Activated CD4-positive, alpha-beta memory T cell treated with anti-CD3 and anti-CD28 coated beads for 36 hours (primary cell): ENCODE measurements at regions of chr11 and their contacts with region 1.

Region 1: DNA sequence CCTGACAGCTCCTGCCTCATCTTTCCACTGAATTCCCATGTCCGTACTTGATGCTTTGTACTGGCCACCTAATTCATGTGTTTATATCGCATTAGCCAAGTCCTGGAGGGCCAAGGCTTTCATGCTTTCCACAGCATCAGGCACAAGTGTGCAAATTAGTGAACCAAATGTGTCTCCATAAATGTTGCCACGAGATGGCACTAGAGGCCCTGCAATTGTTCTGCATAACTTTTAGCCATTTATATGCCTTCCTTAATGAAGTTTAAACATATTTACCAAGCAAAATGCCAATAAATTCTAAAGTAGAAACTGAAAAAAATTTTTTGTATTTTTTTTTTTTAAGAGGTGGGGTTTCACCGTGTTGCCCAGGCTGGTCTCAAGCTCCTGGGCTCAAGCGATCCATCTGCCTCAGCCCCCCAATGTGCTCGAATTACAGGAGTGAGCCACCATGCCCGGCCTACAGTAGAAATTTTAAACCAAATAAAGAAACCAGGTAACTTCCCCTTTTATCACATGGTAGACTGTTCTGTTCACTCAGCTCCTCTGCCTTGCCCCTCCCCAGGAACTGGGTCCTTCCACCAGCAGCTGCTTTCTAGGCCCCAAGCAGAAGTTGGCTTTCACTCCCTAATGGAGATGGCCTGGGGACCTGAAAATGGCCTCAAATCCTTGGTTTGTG is 20.8 kb upstream of the IL18BP start:
- DNase-seq: peak; percentile 55
- H3K4me3 Mint-ChIP-seq: no peak overlapping the region
- H3K27ac Mint-ChIP-seq: no peak overlapping the region
- H3K4me1 Mint-ChIP-seq: peaks cover 3% of the 10 kb centered on the region
- H3K27me3 Mint-ChIP-seq: no peaks in the 10 kb centered on the region

Region 2: GRCh38 chr11:71913756-71914526 is 63.9 kb before region 1 on chr11:
- CTCF ChIA-PET with region 1: interaction called, 4 read pairs
- POLR2A ChIA-PET with region 1: no interaction called
- intact Hi-C with region 1: loop called (anchors 5 kb)
- DNase-seq: no peak
- H3K4me3 Mint-ChIP-seq: no peak overlapping the region
- H3K27ac Mint-ChIP-seq: peak overlapping the region; percentile 75
- H3K4me1 Mint-ChIP-seq: peaks cover 28% of the 10 kb centered on the region
- H3K27me3 Mint-ChIP-seq: no peaks in the 10 kb centered on the region

Region 3: GRCh38 chr11:71948314-71949027 is 29.4 kb before region 1 on chr11:
- CTCF ChIA-PET with region 1: interaction called, 11 read pairs
- POLR2A ChIA-PET with region 1: no interaction called
- intact Hi-C with region 1: no loop called
- DNase-seq: no peak
- H3K4me3 Mint-ChIP-seq: no peak overlapping the region
- H3K27ac Mint-ChIP-seq: no peak overlapping the region
- H3K4me1 Mint-ChIP-seq: peaks cover 31% of the 10 kb centered on the region
- H3K27me3 Mint-ChIP-seq: no peaks in the 10 kb centered on the region

Region 4: DNA sequence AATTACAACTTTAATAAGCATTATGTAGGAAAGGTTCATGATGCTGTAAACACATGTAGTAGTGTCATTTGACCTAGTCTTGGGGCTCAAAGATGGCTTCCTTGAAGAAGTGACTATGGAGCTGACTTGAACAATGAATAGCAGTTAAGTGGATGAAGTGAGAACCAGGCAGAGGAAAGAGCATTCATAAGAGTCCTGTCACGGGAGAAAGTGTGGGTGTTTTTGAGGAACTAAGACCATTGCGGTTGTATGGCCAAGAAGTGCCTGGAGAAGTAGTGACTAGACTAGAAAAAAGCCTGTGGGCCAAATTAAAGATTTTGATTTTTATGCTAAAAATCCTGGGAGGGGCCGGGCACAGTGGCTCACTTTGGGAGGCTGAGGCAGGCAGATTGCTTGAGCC is 13.6 kb after region 1 on chr11:
- CTCF ChIA-PET with region 1: interaction called, 39 read pairs
- POLR2A ChIA-PET with region 1: no interaction called
- intact Hi-C with region 1: no loop called
- DNase-seq: no peak
- H3K4me3 Mint-ChIP-seq: no peak overlapping the region
- H3K27ac Mint-ChIP-seq: no peak overlapping the region
- H3K4me1 Mint-ChIP-seq: peaks cover 5% of the 10 kb centered on the region
- H3K27me3 Mint-ChIP-seq: no peaks in the 10 kb centered on the region

Region 5: GRCh38 chr11:72024069-72024754 is 46.3 kb after region 1 on chr11:
- CTCF ChIA-PET with region 1: interaction called, 13 read pairs
- POLR2A ChIA-PET with region 1: no interaction called
- intact Hi-C with region 1: no loop called
- DNase-seq: no peak
- H3K4me3 Mint-ChIP-seq: no peak overlapping the region
- H3K27ac Mint-ChIP-seq: peak overlapping the region; percentile 2
- H3K4me1 Mint-ChIP-seq: peaks cover 24% of the 10 kb centered on the region
- H3K27me3 Mint-ChIP-seq: no peaks in the 10 kb centered on the region

Region 6: GRCh38 chr11:72174299-72175070 is 196.6 kb after region 1 on chr11:
- CTCF ChIA-PET with region 1: no interaction called
- POLR2A ChIA-PET with region 1: no interaction called
- intact Hi-C with region 1: no loop called
- DNase-seq: no peak
- H3K4me3 Mint-ChIP-seq: no peak overlapping the region
- H3K27ac Mint-ChIP-seq: no peak overlapping the region
- H3K4me1 Mint-ChIP-seq: peaks cover under 1% of the 10 kb centered on the region
- H3K27me3 Mint-ChIP-seq: peaks cover 3% of the 10 kb centered on the region